Naive thymus-derived CD4-positive, alpha-beta T cell (primary cell): ENCODE measurements at regions of chr15 and their contacts with region 1.

Region 1: GRCh38 chr15:100311833-100312476 is 29.8 kb downstream of the ADAMTS17 start:
- DNase-seq: no peak
- ATAC-seq: no peak
- H3K4me3 ChIP-seq: no peak overlapping the region
- H3K4me3 Mint-ChIP-seq: no peak overlapping the region
- H3K27ac ChIP-seq: no peak overlapping the region
- H3K27ac Mint-ChIP-seq: no peak overlapping the region
- H3K4me1 ChIP-seq: no peaks in the 10 kb centered on the region
- H3K4me1 Mint-ChIP-seq: peaks cover 0 to 20% (median 10%) of the 10 kb centered on the region in 7 donors
- H3K27me3 ChIP-seq: no peaks in the 10 kb centered on the region
- H3K27me3 Mint-ChIP-seq: no peaks in the 10 kb centered on the region

Region 2: GRCh38 chr15:100284701-100285100 is 27.3 kb before region 1 on chr15:
- CTCF ChIA-PET with region 1: no interaction called
- POLR2A ChIA-PET with region 1: no interaction called
- intact Hi-C with region 1: loop called in 1 of 2 experiments (anchors 2 kb)
- DNase-seq: no peak
- ATAC-seq: no peak
- H3K4me3 ChIP-seq: no peak overlapping the region
- H3K4me3 Mint-ChIP-seq: no peak overlapping the region
- H3K27ac ChIP-seq: no peak overlapping the region
- H3K27ac Mint-ChIP-seq: no peak overlapping the region
- H3K4me1 ChIP-seq: no peaks in the 10 kb centered on the region
- H3K4me1 Mint-ChIP-seq: peaks cover 0 to 8% (median 4%) of the 10 kb centered on the region in 7 donors
- H3K27me3 ChIP-seq: peaks cover 0 to 2% of the 10 kb centered on the region in 2 donors
- H3K27me3 Mint-ChIP-seq: no peaks in the 10 kb centered on the region